HCT116 (cell line): ENCODE measurements at regions of chr3 and their contacts with region 1.

Region 1: DNA sequence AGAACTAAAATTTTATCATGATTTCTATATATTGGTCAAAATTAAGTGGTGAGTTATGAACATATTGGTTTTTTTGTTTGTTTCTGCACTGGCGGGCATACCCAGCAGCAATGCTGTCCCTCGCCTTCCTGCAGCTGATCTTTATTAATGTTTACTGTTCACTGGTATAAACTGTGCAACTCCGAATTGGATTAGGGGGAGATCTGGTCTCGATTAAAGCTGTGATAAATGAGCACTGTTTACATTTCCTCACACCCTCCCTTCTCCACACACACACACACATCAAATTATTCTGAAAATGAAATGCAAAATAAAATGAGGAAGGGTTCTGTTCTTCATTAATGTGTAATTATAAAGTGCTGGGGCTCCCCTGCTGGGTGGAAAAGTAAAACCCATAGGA is 48.5 kb upstream of the DAZL start:
- DNase-seq: no peak
- ATAC-seq: no peak
- H3K4me3 ChIP-seq: no peak overlapping the region
- H3K27ac ChIP-seq: no peak overlapping the region
- H3K4me1 ChIP-seq: no peaks in the 10 kb centered on the region
- H3K27me3 ChIP-seq: no peaks in the 10 kb centered on the region
- CTCF ChIP-seq: no peak
- POLR2A ChIP-seq: no peak
- RAD21 ChIP-seq: no peak

Region 2: DNA sequence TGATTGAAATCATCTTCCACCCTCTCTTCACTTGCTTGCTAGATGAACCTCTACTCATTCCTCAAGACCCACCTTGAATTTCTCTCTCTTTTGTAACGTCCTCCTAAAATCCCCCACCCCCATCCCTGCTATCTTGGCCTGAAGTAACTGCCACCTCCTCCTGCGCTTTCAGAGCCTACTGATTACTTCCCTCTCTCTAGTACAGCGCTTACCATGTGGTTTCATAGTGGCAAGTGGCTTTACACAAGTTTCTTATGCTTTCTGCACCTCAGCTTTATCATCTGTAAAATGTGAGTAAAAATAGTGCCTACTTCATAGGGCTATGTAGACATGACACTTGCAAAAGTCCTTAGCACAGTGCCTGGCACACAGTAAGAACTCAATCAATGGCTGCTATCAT is 19.8 kb before region 1 on chr3:
- CTCF ChIA-PET with region 1: no interaction called
- POLR2A ChIA-PET with region 1: no interaction called
- RAD21 ChIA-PET with region 1: no interaction called
- intact Hi-C with region 1: loop called (anchors 2 kb)
- DNase-seq: no peak
- ATAC-seq: no peak
- H3K4me3 ChIP-seq: no peak overlapping the region
- H3K27ac ChIP-seq: no peak overlapping the region
- H3K4me1 ChIP-seq: no peaks in the 10 kb centered on the region
- H3K27me3 ChIP-seq: no peaks in the 10 kb centered on the region
- CTCF ChIP-seq: no peak
- POLR2A ChIP-seq: no peak
- RAD21 ChIP-seq: no peak

Region 3: DNA sequence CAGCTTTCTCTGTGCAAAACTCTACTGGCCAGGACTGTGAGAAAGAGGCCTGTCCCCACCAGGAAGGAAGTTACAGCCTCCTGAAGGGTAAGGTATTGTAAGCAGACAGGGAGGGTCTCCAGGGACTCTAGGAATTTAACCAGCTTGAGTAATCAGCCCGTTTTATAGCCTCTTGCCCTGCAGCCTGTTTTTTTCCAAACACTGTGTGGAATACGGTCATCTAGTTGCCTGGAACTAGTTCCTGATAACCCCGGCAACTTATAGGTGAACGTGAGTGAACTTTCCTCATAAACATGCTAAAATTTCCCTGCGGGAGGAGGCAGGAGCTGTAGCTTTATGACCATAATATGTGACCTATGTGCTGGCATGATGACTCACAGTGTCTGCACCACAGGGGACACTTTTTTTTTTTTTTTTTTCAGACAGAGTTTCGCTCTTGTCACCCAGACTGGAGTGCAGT is 11.6 kb after region 1 on chr3:
- CTCF ChIA-PET with region 1: no interaction called
- POLR2A ChIA-PET with region 1: no interaction called
- RAD21 ChIA-PET with region 1: no interaction called
- intact Hi-C with region 1: no loop called
- DNase-seq: peak; percentile 43
- ATAC-seq: peak; percentile 65
- H3K4me3 ChIP-seq: peak overlapping the region in 1 of 2 experiments; percentile 25; a peak in 2 of 4 replicates
- H3K27ac ChIP-seq: no peak overlapping the region
- H3K4me1 ChIP-seq: peaks cover 3 to 14% of the 10 kb centered on the region in 2 experiments; a peak in 2 of 4 replicates
- H3K27me3 ChIP-seq: no peaks in the 10 kb centered on the region
- CTCF ChIP-seq: no peak
- POLR2A ChIP-seq: no peak
- RAD21 ChIP-seq: no peak

Region 4: GRCh38 chr3:17070606-17071005 is 416.9 kb after region 1 on chr3:
- CTCF ChIA-PET with region 1: no interaction called
- POLR2A ChIA-PET with region 1: no interaction called
- RAD21 ChIA-PET with region 1: no interaction called
- intact Hi-C with region 1: no loop called
- DNase-seq: no peak
- ATAC-seq: no peak
- H3K4me3 ChIP-seq: no peak overlapping the region
- H3K27ac ChIP-seq: no peak overlapping the region
- H3K4me1 ChIP-seq: peaks cover 4 to 10% of the 10 kb centered on the region in 2 experiments; a peak in 3 of 4 replicates
- H3K27me3 ChIP-seq: no peaks in the 10 kb centered on the region
- CTCF ChIP-seq: no peak
- POLR2A ChIP-seq: no peak
- RAD21 ChIP-seq: no peak

Region 5: GRCh38 chr3:18111796-18112232 is 1458.1 kb after region 1 on chr3:
- CTCF ChIA-PET with region 1: no interaction called
- POLR2A ChIA-PET with region 1: no interaction called
- RAD21 ChIA-PET with region 1: no interaction called
- intact Hi-C with region 1: no loop called
- DNase-seq: peak; percentile 34
- ATAC-seq: peak; percentile 96
- H3K4me3 ChIP-seq: peak overlapping the region; percentile 16 to 20; a peak in 2 of 4 replicates
- H3K27ac ChIP-seq: no peak overlapping the region
- H3K4me1 ChIP-seq: peaks cover 11 to 25% of the 10 kb centered on the region in 2 experiments; a peak in 3 of 4 replicates
- H3K27me3 ChIP-seq: no peaks in the 10 kb centered on the region
- CTCF ChIP-seq: no peak
- POLR2A ChIP-seq: no peak
- RAD21 ChIP-seq: no peak